ENCODE measurements at regions of chr3 and their contacts with region 1.

Region 1: GRCh38 chr3:128236657-128237056 is 83.4 kb downstream of the EEFSEC start:
- DNase-seq: peak; percentile 45
- H3K4me3 ChIP-seq: no peak overlapping the region
- H3K27ac ChIP-seq: peak overlapping the region in 1 of 2 experiments; percentile 99; a peak in 3 of 4 replicates
- H3K4me1 ChIP-seq: peaks cover 11 to 84% of the 10 kb centered on the region in 2 experiments; a peak in 3 of 4 replicates
- H3K27me3 ChIP-seq: no peaks in the 10 kb centered on the region
- CTCF ChIP-seq: no peak
- EP300 ChIP-seq: no peak; a peak in 1 of 4 replicates
- RAD21 ChIP-seq: peak; percentile 16

Region 2: DNA sequence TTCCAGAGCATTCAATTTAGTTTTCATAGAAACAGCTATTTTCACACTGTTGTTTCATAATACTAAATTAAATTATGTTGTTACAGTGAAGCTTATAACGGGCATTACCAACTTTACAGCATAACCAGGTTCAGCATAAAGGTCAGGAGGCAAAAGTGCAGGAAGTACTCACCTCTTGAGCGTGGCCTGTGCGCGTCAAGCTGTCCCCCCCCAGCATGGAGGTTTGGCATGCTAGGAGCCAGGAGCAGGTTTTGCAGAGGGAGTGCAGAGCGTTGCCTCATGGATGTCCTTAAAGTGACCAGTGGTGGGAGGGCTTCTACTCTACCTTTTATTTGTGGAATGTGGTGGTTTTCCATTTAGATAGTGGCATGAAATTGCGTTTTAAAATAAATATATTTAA is 21.0 kb after region 1 on chr3:
- CTCF ChIA-PET with region 1: interaction called, 13 read pairs
- POLR2A ChIA-PET with region 1: interaction called, 3 read pairs
- DNase-seq: no peak
- H3K4me3 ChIP-seq: no peak overlapping the region
- H3K27ac ChIP-seq: no peak overlapping the region
- H3K4me1 ChIP-seq: peaks cover 0 to 16% of the 10 kb centered on the region in 2 experiments; a peak in 1 of 4 replicates
- H3K27me3 ChIP-seq: no peaks in the 10 kb centered on the region
- CTCF ChIP-seq: no peak
- EP300 ChIP-seq: no peak
- RAD21 ChIP-seq: no peak